ENCODE measurements at regions of chr12 and their contacts with region 1.

Region 1: DNA sequence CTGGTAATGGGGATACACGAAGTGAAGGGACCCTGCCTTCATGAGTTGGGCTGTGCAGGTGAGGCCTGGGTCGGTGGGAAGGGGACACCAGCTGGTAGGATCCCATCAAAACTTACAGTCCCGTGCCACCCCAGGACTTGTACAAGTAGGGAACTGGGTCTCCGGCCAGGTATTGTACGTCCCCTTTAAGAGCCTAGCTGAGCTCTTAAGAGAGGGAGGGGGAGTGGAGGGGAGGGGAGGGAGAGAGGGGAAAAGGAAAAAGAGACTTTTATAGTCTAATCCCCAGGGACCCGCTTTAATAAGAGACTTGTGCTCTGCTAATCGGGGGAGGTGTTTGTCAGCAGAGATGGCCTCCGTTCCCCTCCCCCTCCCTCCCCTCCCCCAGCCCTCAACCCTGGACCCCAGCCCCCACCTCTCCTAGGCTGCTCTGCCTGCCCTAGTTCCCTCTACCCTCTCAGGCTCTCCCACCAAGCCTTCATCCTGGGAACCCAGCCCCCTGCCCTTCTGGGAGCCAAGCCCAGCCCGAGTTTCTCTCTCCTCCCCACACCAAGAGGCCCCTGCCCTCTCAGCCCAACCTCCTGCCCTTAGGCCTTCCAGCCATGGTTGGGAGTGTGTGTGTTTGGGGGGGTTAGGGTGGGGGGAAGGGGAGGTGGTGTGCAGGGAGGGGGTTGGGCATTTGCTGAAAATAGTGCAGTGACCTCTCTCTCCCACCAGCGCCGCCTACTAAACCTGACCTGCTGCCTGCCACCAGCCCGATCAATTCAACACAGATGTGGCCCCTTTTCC is 2.6 kb downstream of the GDF11 start:
- DNase-seq: no peak
- H3K4me3 Mint-ChIP-seq: peak overlapping the region; percentile 92
- H3K27ac Mint-ChIP-seq: no peak overlapping the region
- H3K4me1 Mint-ChIP-seq: peaks cover 46% of the 10 kb centered on the region
- H3K27me3 Mint-ChIP-seq: peaks cover 3% of the 10 kb centered on the region

Region 2: GRCh38 chr12:55707841-55708694 is 37.5 kb before region 1 on chr12 and contains the start of gene ITGA7:
- intact Hi-C with region 1: no loop called
- DNase-seq: peak; percentile 53
- H3K4me3 Mint-ChIP-seq: peak within 1 kb of the TSS; percentile 78
- H3K27ac Mint-ChIP-seq: no peak within 1 kb of the TSS
- H3K4me1 Mint-ChIP-seq: peaks cover 21% of the 10 kb centered on the region
- H3K27me3 Mint-ChIP-seq: peaks cover 61% of the 10 kb centered on the region
- total RNA-seq, gene ITGA7: 0.88 and 1.1 TPM in 2 replicates

Region 3: GRCh38 chr12:55760663-55761062 is 15.1 kb after region 1 on chr12:
- intact Hi-C with region 1: loop called (anchors 2 kb)
- DNase-seq: no peak
- H3K4me3 Mint-ChIP-seq: no peak overlapping the region
- H3K27ac Mint-ChIP-seq: peak overlapping the region; percentile 69
- H3K4me1 Mint-ChIP-seq: peaks cover 11% of the 10 kb centered on the region
- H3K27me3 Mint-ChIP-seq: no peaks in the 10 kb centered on the region

Measured in activated T-helper 1 cell treated with anti-CD3 and anti-CD28 coated beads, Interleukin-12 subunit alpha, Interleukin-12 subunit beta, Interleukin-2, Interleukin-4 antibody, amounts not matched to agents 30 ng/mL and 10 ng/mL and 1 ng/mL, durations not matched to agents 14 hours and 24 hours and 36 hours (primary cell).